ENCODE measurements at regions of chr11 and their contacts with region 1.

Region 1: GRCh38 chr11:6682936-6683861 is at the start of gene MRPL17:
- DNase-seq: peak; percentile 97 to 98
- H3K4me3 ChIP-seq: peak within 1 kb of the TSS; percentile 90 to 99 (median 98)
- H3K27ac ChIP-seq: peak within 1 kb of the TSS; percentile 97
- H3K4me1 ChIP-seq: peaks cover 2 to 8% (median 5%) of the 10 kb centered on the region in 4 experiments; a peak in 4 of 7 replicates
- H3K27me3 ChIP-seq: no peaks in the 10 kb centered on the region; a peak in 1 of 7 replicates
- CTCF ChIP-seq: peak; percentile 53 to 82 (median 80)
- EP300 ChIP-seq: no peak
- POLR2A ChIP-seq: peak; percentile 87 to 98
- RAD21 ChIP-seq: peak; percentile 61 to 64; a peak in 3 of 4 replicates
- total RNA-seq, gene MRPL17: 70.5 and 71.7 TPM in 2 replicates

Region 2: DNA sequence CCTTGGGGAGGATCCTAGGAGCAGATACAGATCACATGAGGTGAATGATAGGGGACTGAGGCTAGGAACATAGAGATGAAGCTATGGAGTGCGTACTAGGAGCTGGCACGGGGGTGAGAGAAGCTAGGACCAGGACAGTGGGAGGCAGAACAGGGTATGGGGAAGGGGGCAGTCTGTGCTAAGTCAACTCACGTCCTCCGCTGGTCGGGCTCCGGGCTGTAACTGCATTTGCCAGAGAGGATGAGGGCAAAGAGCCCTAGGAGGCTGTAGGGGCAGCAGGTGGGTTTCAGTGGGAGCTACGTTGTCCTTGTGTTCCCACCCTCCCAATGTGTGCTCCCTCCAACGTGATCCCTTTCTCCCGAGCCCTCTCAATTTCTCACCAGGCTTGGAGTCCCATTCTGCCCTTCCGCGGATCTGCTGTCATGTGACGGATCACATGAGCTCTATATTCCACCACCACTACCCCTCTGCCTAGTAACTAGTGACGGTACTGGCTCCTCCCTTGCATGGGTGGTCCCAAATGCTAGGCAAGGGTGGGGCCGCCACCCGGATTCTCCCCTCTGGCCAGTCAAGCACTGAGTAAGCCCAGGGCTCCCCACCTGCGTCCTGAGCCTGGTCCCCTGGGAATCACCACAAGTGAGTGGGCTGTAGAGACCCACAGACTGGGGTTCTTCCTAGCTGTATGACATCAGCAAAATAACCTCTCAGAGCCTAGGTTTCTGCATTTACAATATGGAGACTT is 64.0 kb before region 1 on chr11 and contains the start of gene TPP1:
- CTCF ChIA-PET with region 1: interaction called, 9 read pairs
- POLR2A ChIA-PET with region 1: interaction called, 13 read pairs
- DNase-seq: peak in 1 of 2 experiments; percentile 91
- H3K4me3 ChIP-seq: peak within 1 kb of the TSS; percentile 72 to 97 (median 89)
- H3K27ac ChIP-seq: peak within 1 kb of the TSS; percentile 39; the same call in 1 of the 2 replicates
- H3K4me1 ChIP-seq: peaks cover 0 to 7% (median 4%) of the 10 kb centered on the region in 4 experiments; a peak in 3 of 7 replicates
- H3K27me3 ChIP-seq: no peaks in the 10 kb centered on the region
- CTCF ChIP-seq: no peak
- EP300 ChIP-seq: 0 out of 3 replicates have a peak, but pooled peaks of 1 of the 2 experiments have one; percentile 56
- POLR2A ChIP-seq: peak; percentile 72 to 93
- RAD21 ChIP-seq: no peak
- total RNA-seq, gene TPP1: 34.9 and 36.1 TPM in 2 replicates

Region 3: GRCh38 chr11:6648501-6648900 is 34.7 kb before region 1 on chr11:
- CTCF ChIA-PET with region 1: no interaction called
- POLR2A ChIA-PET with region 1: interaction called, 12 read pairs
- DNase-seq: no peak
- H3K4me3 ChIP-seq: no peak overlapping the region
- H3K27ac ChIP-seq: no peak overlapping the region
- H3K4me1 ChIP-seq: peaks cover 3 to 10% (median 5%) of the 10 kb centered on the region in 4 experiments; a peak in 6 of 7 replicates
- H3K27me3 ChIP-seq: peaks cover 0 to 4% (median 1%) of the 10 kb centered on the region in 4 experiments; a peak in 2 of 7 replicates
- CTCF ChIP-seq: no peak
- EP300 ChIP-seq: no peak
- POLR2A ChIP-seq: no peak
- RAD21 ChIP-seq: no peak

Region 4: DNA sequence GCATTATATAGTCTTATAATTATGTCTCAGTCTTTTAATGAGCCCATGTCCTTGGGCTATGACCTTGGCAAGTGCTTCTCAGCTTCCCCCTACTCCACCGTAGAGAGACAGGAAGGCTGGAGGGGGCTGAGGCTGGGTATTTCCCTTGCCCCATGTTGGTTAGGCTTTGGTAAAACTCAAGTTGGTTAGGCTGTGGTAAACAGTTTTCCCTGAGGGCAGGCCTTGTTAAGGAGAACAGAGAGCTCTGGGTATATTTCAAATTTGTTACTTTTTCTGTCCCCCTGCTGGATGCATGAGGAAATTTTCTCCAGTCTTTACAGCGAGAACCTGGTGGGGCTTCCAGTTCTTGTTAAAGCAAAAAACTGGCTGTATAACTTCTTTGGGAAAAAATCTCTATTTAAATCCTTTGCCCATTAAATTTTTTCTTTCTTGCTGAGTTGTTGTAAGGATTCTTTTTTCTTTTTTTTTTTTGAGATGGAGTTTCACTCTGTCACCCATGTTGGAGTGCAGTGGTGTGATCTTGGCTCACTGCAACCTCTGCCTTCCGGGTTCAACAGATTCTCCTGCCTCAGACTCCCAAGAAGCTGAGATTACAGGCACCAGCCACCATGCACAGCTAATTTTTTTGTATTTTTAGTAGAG is 15.3 kb before region 1 on chr11:
- CTCF ChIA-PET with region 1: interaction called, 6 read pairs
- POLR2A ChIA-PET with region 1: interaction called, 32 read pairs
- DNase-seq: no peak
- H3K4me3 ChIP-seq: no peak overlapping the region
- H3K27ac ChIP-seq: no peak overlapping the region
- H3K4me1 ChIP-seq: no peaks in the 10 kb centered on the region
- H3K27me3 ChIP-seq: 0 out of 7 replicates have a peak, but pooled peaks cover 0 to 3% (median 0%) of the 10 kb centered on the region in 4 experiments
- CTCF ChIP-seq: peak in 2 of 3 experiments; percentile 50 to 65; a peak in 2 of 4 replicates
- EP300 ChIP-seq: no peak
- POLR2A ChIP-seq: no peak
- RAD21 ChIP-seq: peak; percentile 39 to 50

Region 5: DNA sequence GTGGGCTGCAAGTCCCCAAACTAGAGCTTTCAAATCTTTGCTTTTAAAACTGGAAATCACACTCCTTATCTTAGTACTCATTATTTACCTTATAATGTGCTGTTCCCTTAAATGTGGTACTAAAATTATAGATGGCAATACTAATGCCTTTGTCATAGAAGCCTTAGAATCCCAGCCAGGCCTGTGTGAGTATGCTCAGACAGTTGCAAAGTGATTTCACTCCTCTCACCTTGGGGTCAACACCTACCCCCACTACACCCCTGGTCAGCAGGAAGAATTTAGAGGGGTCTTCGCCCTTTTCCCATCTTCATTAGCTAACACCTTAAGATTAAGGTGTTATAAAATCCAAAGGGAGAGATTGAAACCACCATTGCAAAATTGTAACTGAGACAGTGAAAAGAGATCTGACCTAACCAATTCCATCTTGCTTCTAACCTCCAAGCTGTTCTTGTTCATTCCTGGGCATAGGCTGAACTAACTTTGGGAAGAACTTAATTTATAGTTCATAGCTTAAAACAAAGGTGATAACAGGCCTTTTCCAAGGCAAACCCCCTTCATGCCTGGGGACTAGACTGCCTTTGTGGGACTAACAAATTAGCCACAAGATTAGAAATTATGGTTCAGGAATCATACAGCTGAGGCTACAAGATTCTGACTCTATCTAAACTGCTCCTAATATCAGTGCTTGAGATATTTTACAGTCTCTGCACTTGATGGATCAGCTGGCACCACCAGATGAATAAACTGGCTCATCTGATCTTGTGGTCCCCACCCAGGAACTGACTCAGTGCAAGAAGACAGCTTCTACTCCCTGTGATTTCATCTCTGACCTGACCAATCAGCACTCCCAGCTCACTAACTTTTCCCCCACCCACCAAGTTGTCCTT is 10.4 kb after region 1 on chr11:
- CTCF ChIA-PET with region 1: interaction called, 13 read pairs
- POLR2A ChIA-PET with region 1: interaction called, 3 read pairs
- DNase-seq: no peak
- H3K4me3 ChIP-seq: no peak overlapping the region
- H3K27ac ChIP-seq: no peak overlapping the region
- H3K4me1 ChIP-seq: no peaks in the 10 kb centered on the region
- H3K27me3 ChIP-seq: no peaks in the 10 kb centered on the region; a peak in 1 of 7 replicates
- CTCF ChIP-seq: no peak
- EP300 ChIP-seq: no peak
- POLR2A ChIP-seq: no peak
- RAD21 ChIP-seq: no peak

Region 6: DNA sequence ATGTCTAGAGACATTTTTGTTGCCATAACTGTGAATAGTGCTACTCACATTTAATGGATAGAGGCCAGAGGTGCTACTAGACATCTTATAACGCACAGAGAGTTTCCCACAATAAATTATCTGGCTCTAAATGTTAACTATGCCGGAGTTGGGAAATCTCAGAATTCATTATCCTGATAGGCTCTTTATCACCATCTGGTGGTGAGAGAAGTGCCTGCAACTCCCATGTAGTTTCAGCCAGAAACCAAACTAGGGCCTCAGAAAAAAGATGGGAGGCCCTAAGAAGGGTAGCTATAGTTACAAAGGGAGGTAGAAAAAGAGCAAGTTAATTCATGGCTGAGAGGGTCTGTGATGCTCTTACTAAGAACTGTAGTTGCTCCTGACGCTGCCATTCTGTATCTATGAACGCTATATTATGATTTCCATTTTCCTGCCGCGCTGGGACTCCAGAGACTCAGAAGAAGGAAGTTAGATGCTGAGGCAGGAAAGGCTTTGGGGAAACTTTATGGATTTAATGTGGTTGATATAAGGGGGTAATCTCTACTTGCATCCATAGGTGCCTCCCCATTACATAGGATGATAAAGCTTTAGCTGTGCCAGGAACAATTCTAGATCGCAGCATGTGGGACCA is 22.8 kb after region 1 on chr11:
- CTCF ChIA-PET with region 1: interaction called, 22 read pairs
- POLR2A ChIA-PET with region 1: interaction called, 3 read pairs
- DNase-seq: peak in 1 of 2 experiments; percentile 64
- H3K4me3 ChIP-seq: no peak overlapping the region
- H3K27ac ChIP-seq: no peak overlapping the region
- H3K4me1 ChIP-seq: no peaks in the 10 kb centered on the region
- H3K27me3 ChIP-seq: peaks cover 0 to 2% (median 0%) of the 10 kb centered on the region in 4 experiments; a peak in 1 of 7 replicates
- CTCF ChIP-seq: peak in 2 of 3 experiments; percentile 77 to 80; a peak in 3 of 4 replicates
- EP300 ChIP-seq: no peak
- POLR2A ChIP-seq: no peak
- RAD21 ChIP-seq: peak; percentile 64 to 71

Measured in H1 (cell line).